ENCODE measurements at regions of chr14 and their contacts with region 1.

Region 1: DNA sequence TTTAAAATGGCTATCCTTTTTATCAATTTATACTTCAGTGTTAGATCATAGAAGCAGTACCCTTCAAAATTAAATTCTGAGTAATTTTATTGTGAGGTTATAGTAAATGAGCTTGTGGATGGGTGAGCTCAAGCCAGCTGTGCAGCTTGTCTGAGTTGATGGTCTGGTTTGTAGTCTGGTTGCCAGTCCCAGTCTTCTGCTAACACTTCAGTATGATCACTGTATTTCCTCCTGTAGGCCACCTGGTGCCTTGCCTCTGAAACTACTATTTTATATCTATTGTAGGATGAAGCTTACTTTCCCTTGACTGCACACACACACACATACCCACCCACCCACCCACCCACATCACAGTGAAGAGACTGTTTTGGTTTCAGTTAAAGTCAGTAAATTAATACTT is 496.4 kb downstream of the PCNX1 start:
- DNase-seq: peak; percentile 45
- H3K4me3 Mint-ChIP-seq: no peak overlapping the region
- H3K27ac Mint-ChIP-seq: no peak overlapping the region
- H3K4me1 Mint-ChIP-seq: peaks cover 35% of the 10 kb centered on the region
- H3K27me3 Mint-ChIP-seq: no peaks in the 10 kb centered on the region

Region 2: GRCh38 chr14:70278281-70278680 is 1125.4 kb before region 1 on chr14:
- CTCF ChIA-PET with region 1: no interaction called
- POLR2A ChIA-PET with region 1: no interaction called
- DNase-seq: no peak
- H3K4me3 Mint-ChIP-seq: no peak overlapping the region
- H3K27ac Mint-ChIP-seq: no peak overlapping the region
- H3K4me1 Mint-ChIP-seq: no peaks in the 10 kb centered on the region
- H3K27me3 Mint-ChIP-seq: peaks cover 13% of the 10 kb centered on the region

Region 3: DNA sequence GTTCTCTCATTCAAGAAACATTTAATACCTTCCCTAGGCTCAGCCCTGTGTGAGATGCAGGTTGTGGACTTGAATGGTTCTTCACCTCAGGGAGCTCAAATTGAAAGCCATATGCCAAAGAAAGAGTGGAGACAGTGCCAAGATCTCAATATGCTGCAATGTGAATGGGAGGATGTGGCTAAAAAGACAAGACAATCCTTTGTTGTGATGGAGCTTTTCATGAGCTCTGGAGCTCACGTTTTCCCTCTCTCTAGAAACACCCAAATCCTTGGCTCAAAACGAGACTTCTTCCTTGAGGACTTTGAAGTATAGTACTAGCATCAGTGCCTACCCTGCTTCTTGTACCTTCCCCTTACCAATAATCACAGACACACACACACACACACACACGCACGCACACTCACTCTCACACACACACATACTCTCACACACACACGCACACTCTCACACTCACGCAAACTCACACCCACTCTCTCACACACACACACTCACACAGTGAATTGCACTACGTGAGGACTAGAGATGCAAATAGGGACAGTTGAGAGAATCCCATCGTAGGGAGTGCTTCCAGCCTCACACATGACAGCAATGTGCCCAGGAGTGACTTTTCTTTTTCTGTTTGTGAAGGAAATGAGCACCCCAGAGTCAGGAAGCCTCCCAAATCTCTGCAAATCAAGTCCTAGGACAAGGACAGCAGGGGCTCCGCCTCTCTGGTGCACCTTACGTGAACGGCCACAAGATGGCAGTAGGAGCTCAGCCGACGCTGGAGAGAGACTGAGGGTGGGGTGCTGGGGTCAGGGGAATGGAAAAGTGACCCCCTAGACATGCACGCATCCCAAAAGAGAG is 265.0 kb before region 1 on chr14:
- CTCF ChIA-PET with region 1: interaction called, 42 read pairs
- POLR2A ChIA-PET with region 1: interaction called, 11 read pairs
- DNase-seq: peak; percentile 63
- H3K4me3 Mint-ChIP-seq: no peak overlapping the region
- H3K27ac Mint-ChIP-seq: no peak overlapping the region
- H3K4me1 Mint-ChIP-seq: peaks cover 47% of the 10 kb centered on the region
- H3K27me3 Mint-ChIP-seq: no peaks in the 10 kb centered on the region

Region 4: GRCh38 chr14:71415404-71415690 is 11.7 kb after region 1 on chr14:
- CTCF ChIA-PET with region 1: interaction called, 11 read pairs
- POLR2A ChIA-PET with region 1: interaction called, 7 read pairs
- DNase-seq: no peak
- H3K4me3 Mint-ChIP-seq: no peak overlapping the region
- H3K27ac Mint-ChIP-seq: no peak overlapping the region
- H3K4me1 Mint-ChIP-seq: peaks cover 22% of the 10 kb centered on the region
- H3K27me3 Mint-ChIP-seq: no peaks in the 10 kb centered on the region

Region 5: GRCh38 chr14:72000907-72001306 is 597.3 kb after region 1 on chr14:
- CTCF ChIA-PET with region 1: no interaction called
- POLR2A ChIA-PET with region 1: no interaction called
- DNase-seq: no peak
- H3K4me3 Mint-ChIP-seq: no peak overlapping the region
- H3K27ac Mint-ChIP-seq: no peak overlapping the region
- H3K4me1 Mint-ChIP-seq: no peaks in the 10 kb centered on the region
- H3K27me3 Mint-ChIP-seq: peaks cover 10% of the 10 kb centered on the region